HEK293T (cell line): ENCODE measurements at regions of chr12 and their contacts with region 1.

Region 1: GRCh38 chr12:92145731-92146496 is at the start of gene BTG1:
- DNase-seq: peak; percentile 89

Region 2: GRCh38 chr12:92021665-92022033 is 124.3 kb before region 1 on chr12:
- CTCF ChIA-PET with region 1: no interaction called
- POLR2A ChIA-PET with region 1: interaction called, 10 read pairs
- DNase-seq: peak; percentile 13

Region 3: GRCh38 chr12:92078167-92079053 is 67.5 kb before region 1 on chr12:
- CTCF ChIA-PET with region 1: interaction called, 3 read pairs
- POLR2A ChIA-PET with region 1: interaction called, 16 read pairs
- DNase-seq: no peak

Region 4: GRCh38 chr12:92114834-92115233 is 31.1 kb before region 1 on chr12:
- CTCF ChIA-PET with region 1: no interaction called
- POLR2A ChIA-PET with region 1: interaction called, 10 read pairs
- DNase-seq: no peak

Region 5: GRCh38 chr12:92206596-92206995 is 60.7 kb after region 1 on chr12:
- CTCF ChIA-PET with region 1: no interaction called
- POLR2A ChIA-PET with region 1: interaction called, 15 read pairs
- DNase-seq: no peak

Region 6: GRCh38 chr12:92272061-92272964 is 126.4 kb after region 1 on chr12:
- CTCF ChIA-PET with region 1: no interaction called
- POLR2A ChIA-PET with region 1: no interaction called
- DNase-seq: no peak

Region 7: GRCh38 chr12:92408072-92408900 is 262.4 kb after region 1 on chr12:
- CTCF ChIA-PET with region 1: no interaction called
- POLR2A ChIA-PET with region 1: interaction called, 15 read pairs
- DNase-seq: peak; percentile 49